CD4-positive, alpha-beta T cell (primary cell): ENCODE measurements at regions of chr7 and their contacts with region 1.

Region 1: GRCh38 chr7:107879400-107880035 is 11.5 kb upstream of the DLD start:
- DNase-seq: peak in 6 of 14 experiments; percentile 9 to 79 (median 58)
- ATAC-seq: peak; percentile 74
- H3K4me3 ChIP-seq: no peak overlapping the region
- H3K4me3 Mint-ChIP-seq: no peak overlapping the region
- H3K27ac ChIP-seq: no peak overlapping the region
- H3K27ac Mint-ChIP-seq: no peak overlapping the region
- H3K4me1 ChIP-seq: peaks cover 4% of the 10 kb centered on the region
- H3K4me1 Mint-ChIP-seq: peaks cover 36% of the 10 kb centered on the region
- H3K27me3 ChIP-seq: peaks cover 0 to 5% of the 10 kb centered on the region in 2 experiments
- H3K27me3 Mint-ChIP-seq: peaks cover 18% of the 10 kb centered on the region
- CTCF ChIP-seq: peak; percentile 72

Region 2: DNA sequence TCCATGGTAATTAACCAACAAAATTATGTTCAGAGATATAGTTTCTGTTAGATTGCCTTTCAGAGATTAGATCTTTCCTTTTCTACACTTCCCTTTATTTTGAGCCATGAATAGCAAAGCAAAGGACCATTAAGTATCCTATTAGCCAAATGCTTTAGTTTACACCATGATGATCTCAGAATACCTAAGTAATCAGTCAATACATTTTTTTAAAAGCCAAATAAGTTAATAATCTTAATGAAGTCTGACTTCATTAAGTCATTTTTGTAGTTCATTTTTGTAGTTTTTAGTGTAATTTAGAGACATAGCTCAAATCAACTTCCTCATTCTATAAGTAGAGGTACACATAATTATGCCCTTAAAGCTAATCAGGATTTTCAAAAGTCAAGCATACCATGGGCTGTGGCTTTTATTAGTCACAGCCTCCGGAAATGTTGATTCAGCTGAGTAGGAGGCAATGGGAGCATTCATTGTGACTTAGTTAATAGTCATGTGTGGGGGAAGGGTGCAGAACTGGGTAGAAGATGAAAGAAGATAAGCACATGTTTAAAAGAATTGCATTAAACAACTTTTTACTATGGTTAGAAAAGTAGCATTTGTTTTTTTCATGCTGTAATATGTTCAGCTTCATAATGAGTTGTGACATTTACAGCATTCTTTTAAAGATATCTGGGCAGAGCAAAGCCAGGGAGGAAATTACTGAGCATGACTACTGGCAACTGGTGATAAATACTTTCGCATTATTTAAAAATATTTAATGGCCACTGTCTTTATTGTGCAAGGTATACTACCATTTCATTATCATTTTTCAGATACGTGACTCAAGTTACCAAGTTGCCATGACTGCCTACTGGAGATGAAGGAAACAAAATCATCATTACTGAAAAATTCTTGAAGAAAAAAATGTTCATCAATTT is 1161.3 kb before region 1 on chr7:
- CTCF ChIA-PET with region 1: no interaction called
- POLR2A ChIA-PET with region 1: no interaction called
- intact Hi-C with region 1: no loop called
- DNase-seq: peak in 10 of 14 experiments; percentile 22 to 81 (median 42)
- ATAC-seq: peak; percentile 97
- H3K4me3 ChIP-seq: no peak overlapping the region
- H3K4me3 Mint-ChIP-seq: no peak overlapping the region
- H3K27ac ChIP-seq: no peak overlapping the region
- H3K27ac Mint-ChIP-seq: no peak overlapping the region
- H3K4me1 ChIP-seq: peaks cover 6% of the 10 kb centered on the region
- H3K4me1 Mint-ChIP-seq: no peaks in the 10 kb centered on the region
- H3K27me3 ChIP-seq: no peaks in the 10 kb centered on the region
- H3K27me3 Mint-ChIP-seq: no peaks in the 10 kb centered on the region
- CTCF ChIP-seq: no peak

Region 3: DNA sequence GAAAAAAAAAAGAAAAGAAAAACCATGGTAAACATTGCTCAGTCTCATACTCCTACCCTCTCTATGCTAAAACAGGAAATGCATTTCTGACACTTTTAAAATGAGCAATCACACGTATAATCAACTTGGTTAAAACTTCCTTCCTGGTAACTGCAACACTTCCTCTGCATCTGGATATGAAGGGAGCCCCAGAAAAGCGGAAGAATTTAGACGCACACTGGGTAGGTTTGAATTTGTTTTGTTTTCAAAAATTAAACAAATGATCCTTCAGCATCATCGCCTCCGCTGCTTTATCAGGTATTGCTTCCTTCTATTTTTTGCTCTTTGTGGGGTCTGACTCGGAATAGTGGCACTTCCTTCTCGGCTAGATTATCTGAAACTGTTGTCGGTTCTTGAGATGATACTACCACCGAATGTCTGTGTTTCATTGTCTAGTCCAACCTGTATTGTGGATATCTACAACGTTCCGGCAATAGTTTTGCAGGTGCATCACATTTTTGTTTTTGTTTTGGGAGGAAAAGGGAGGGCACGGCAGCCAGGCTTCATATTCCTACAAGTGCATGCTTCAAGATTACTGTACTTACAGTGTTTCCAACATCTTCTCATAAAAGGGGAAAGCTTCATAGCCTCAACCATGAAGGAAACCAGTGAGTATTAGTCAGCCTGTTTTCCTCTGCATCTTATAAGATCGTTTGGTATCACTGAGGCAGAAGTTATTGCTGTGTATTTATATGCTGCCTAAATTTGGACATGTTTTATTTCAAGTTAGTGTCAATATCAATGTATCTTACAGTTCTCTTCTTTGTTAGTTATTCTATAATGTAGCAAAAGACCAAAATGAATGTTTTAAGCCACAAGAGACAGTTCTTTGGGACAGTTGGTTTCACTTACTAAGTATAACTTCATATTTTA is 1014.1 kb before region 1 on chr7 and contains the start of gene PIK3CG:
- CTCF ChIA-PET with region 1: no interaction called
- POLR2A ChIA-PET with region 1: no interaction called
- intact Hi-C with region 1: loop called in 1 of 2 experiments (anchors 10 kb)
- DNase-seq: peak in 5 of 14 experiments; percentile 6 to 86 (median 75)
- ATAC-seq: peak; percentile 94
- H3K4me3 ChIP-seq: peak within 1 kb of the TSS; percentile 62
- H3K4me3 Mint-ChIP-seq: peak within 1 kb of the TSS; percentile 92
- H3K27ac ChIP-seq: peak within 1 kb of the TSS; percentile 77 to 80
- H3K27ac Mint-ChIP-seq: peak within 1 kb of the TSS; percentile 93
- H3K4me1 ChIP-seq: peaks cover 61% of the 10 kb centered on the region
- H3K4me1 Mint-ChIP-seq: peaks cover 82% of the 10 kb centered on the region
- H3K27me3 ChIP-seq: no peaks in the 10 kb centered on the region
- H3K27me3 Mint-ChIP-seq: no peaks in the 10 kb centered on the region
- CTCF ChIP-seq: no peak
- total RNA-seq, gene PIK3CG: 20.8 to 21.2 TPM

Region 4: DNA sequence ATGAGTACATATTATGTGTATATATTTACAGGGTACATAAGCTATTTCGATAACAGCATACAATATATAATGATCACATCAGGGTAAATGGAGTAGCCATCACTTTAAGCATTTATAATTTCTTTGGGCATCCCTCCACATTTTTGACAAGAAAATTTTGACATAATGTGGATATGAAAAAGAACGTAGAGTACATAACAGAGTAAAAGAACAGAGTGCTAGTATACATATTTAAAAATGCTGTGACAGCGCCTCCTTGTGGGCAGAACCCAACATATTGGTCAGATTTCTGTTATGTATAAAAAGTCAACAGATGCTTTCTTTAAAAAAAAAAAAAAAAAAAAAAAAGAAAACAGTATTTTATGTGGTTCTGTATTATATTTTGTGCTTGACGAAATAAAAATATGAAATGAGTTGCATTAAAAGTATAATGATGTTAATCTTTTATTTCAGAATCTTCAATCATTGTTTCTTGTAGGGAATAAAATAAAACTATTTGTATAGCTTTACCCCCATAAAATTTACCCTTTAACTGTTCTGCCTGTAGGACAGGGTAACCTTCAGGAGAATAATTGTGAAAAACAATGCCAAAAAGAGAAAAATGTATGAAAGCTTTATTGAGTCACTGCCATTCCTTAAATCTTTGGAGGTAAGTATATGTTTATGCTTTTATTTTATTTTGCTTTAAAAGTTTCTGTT is 729.0 kb before region 1 on chr7:
- CTCF ChIA-PET with region 1: no interaction called
- POLR2A ChIA-PET with region 1: no interaction called
- intact Hi-C with region 1: loop called in 1 of 2 experiments (anchors 10 kb)
- DNase-seq: peak; percentile 60 to 89 (median 76)
- ATAC-seq: peak; percentile 89
- H3K4me3 ChIP-seq: no peak overlapping the region
- H3K4me3 Mint-ChIP-seq: no peak overlapping the region
- H3K27ac ChIP-seq: no peak overlapping the region
- H3K27ac Mint-ChIP-seq: no peak overlapping the region
- H3K4me1 ChIP-seq: no peaks in the 10 kb centered on the region
- H3K4me1 Mint-ChIP-seq: peaks cover 6% of the 10 kb centered on the region
- H3K27me3 ChIP-seq: no peaks in the 10 kb centered on the region
- H3K27me3 Mint-ChIP-seq: no peaks in the 10 kb centered on the region
- CTCF ChIP-seq: peak; percentile 94

Region 5: GRCh38 chr7:107201795-107202450 is 677.6 kb before region 1 on chr7:
- CTCF ChIA-PET with region 1: no interaction called
- POLR2A ChIA-PET with region 1: no interaction called
- intact Hi-C with region 1: loop called (anchors 2 to 10 kb)
- DNase-seq: peak in 7 of 14 experiments; percentile 13 to 52 (median 25)
- ATAC-seq: peak; percentile 72
- H3K4me3 ChIP-seq: no peak overlapping the region
- H3K4me3 Mint-ChIP-seq: no peak overlapping the region
- H3K27ac ChIP-seq: no peak overlapping the region
- H3K27ac Mint-ChIP-seq: peak overlapping the region; percentile 19
- H3K4me1 ChIP-seq: no peaks in the 10 kb centered on the region
- H3K4me1 Mint-ChIP-seq: no peaks in the 10 kb centered on the region
- H3K27me3 ChIP-seq: no peaks in the 10 kb centered on the region
- H3K27me3 Mint-ChIP-seq: no peaks in the 10 kb centered on the region
- CTCF ChIP-seq: peak; percentile 23

Region 6: GRCh38 chr7:107462740-107463444 is 416.6 kb before region 1 on chr7:
- CTCF ChIA-PET with region 1: interaction called, 6 read pairs
- POLR2A ChIA-PET with region 1: interaction called, 3 read pairs
- intact Hi-C with region 1: loop called (anchors 1 to 2 kb)
- DNase-seq: peak; percentile 10 to 76 (median 32)
- ATAC-seq: peak; percentile 73
- H3K4me3 ChIP-seq: no peak overlapping the region
- H3K4me3 Mint-ChIP-seq: no peak overlapping the region
- H3K27ac ChIP-seq: no peak overlapping the region
- H3K27ac Mint-ChIP-seq: no peak overlapping the region
- H3K4me1 ChIP-seq: no peaks in the 10 kb centered on the region
- H3K4me1 Mint-ChIP-seq: peaks cover 4% of the 10 kb centered on the region
- H3K27me3 ChIP-seq: no peaks in the 10 kb centered on the region
- H3K27me3 Mint-ChIP-seq: no peaks in the 10 kb centered on the region
- CTCF ChIP-seq: peak; percentile 60

Region 7: DNA sequence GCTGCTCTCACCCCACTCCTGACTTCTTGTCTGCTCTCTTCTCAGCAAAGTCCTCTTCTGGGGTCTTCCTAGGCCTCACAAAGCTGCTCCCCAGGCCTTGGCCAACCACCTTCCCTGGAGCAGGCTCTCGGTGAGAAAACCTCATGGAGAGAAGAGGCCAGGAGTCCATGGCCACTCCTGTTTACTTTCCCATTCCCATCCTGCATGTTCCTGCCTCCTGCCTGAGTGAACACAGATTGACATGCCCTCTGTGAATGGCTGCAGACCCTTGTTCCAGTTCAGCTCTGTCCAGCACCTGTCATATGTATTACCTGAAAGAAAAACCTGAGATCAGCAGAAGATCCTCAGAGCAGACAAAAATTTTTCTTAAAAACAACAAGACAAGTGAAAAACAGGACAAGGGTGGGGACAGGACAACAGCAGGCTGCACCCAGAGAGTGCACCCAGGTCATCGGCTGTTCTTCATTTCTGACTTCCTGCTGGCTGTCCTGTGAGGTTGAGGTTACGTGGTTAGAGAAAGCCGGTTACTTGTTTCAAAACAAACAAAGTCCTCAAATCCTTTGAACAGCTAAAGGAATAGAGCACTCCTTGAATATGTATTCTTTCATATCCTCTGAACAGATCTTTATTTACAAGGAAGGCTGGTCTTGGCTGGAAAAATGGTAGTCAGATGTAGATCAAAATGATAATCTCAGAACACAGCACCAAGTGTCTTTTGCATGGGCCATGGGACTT is 22.5 kb before region 1 on chr7:
- CTCF ChIA-PET with region 1: interaction called, 8 read pairs
- POLR2A ChIA-PET with region 1: interaction called, 18 read pairs
- intact Hi-C with region 1: no loop called
- DNase-seq: peak in 10 of 14 experiments; percentile 13 to 76 (median 30)
- ATAC-seq: peak; percentile 87
- H3K4me3 ChIP-seq: no peak overlapping the region
- H3K4me3 Mint-ChIP-seq: peak overlapping the region; percentile 43
- H3K27ac ChIP-seq: peak overlapping the region; percentile 6 to 76
- H3K27ac Mint-ChIP-seq: peak overlapping the region; percentile 87
- H3K4me1 ChIP-seq: peaks cover 40% of the 10 kb centered on the region
- H3K4me1 Mint-ChIP-seq: peaks cover 79% of the 10 kb centered on the region
- H3K27me3 ChIP-seq: no peaks in the 10 kb centered on the region
- H3K27me3 Mint-ChIP-seq: no peaks in the 10 kb centered on the region
- CTCF ChIP-seq: no peak

Region 8: GRCh38 chr7:107890962-107891635 is 11.6 kb after region 1 on chr7 and contains the start of gene DLD:
- CTCF ChIA-PET with region 1: interaction called, 19 read pairs
- POLR2A ChIA-PET with region 1: interaction called, 11 read pairs
- intact Hi-C with region 1: no loop called
- DNase-seq: peak; percentile 84 to 97 (median 90)
- ATAC-seq: peak; percentile 96
- H3K4me3 ChIP-seq: peak within 1 kb of the TSS; percentile 78
- H3K4me3 Mint-ChIP-seq: peak within 1 kb of the TSS; percentile 99
- H3K27ac ChIP-seq: peak within 1 kb of the TSS; percentile 85 to 89
- H3K27ac Mint-ChIP-seq: peak within 1 kb of the TSS; percentile 95
- H3K4me1 ChIP-seq: peaks cover 27% of the 10 kb centered on the region
- H3K4me1 Mint-ChIP-seq: peaks cover 54% of the 10 kb centered on the region
- H3K27me3 ChIP-seq: no peaks in the 10 kb centered on the region
- H3K27me3 Mint-ChIP-seq: no peaks in the 10 kb centered on the region
- CTCF ChIP-seq: no peak
- total RNA-seq, gene DLD: 74.3 to 74.9 TPM